Caco-2 (cell line): ENCODE measurements at regions of chr13 and their contacts with region 1.

Region 1: GRCh38 chr13:44050450-44051063 is 170.9 kb downstream of the LACC1 start:
- DNase-seq: peak in 1 of 2 experiments; percentile 43
- H3K4me3 ChIP-seq: no peak overlapping the region
- H3K4me3 Mint-ChIP-seq: no peak overlapping the region
- H3K27ac Mint-ChIP-seq: no peak overlapping the region
- H3K4me1 ChIP-seq: peaks cover 42% of the 10 kb centered on the region
- H3K4me1 Mint-ChIP-seq: peaks cover 36% of the 10 kb centered on the region
- H3K27me3 ChIP-seq: no peaks in the 10 kb centered on the region
- H3K27me3 Mint-ChIP-seq: no peaks in the 10 kb centered on the region
- CTCF ChIP-seq: peak; percentile 70 to 78

Region 2: DNA sequence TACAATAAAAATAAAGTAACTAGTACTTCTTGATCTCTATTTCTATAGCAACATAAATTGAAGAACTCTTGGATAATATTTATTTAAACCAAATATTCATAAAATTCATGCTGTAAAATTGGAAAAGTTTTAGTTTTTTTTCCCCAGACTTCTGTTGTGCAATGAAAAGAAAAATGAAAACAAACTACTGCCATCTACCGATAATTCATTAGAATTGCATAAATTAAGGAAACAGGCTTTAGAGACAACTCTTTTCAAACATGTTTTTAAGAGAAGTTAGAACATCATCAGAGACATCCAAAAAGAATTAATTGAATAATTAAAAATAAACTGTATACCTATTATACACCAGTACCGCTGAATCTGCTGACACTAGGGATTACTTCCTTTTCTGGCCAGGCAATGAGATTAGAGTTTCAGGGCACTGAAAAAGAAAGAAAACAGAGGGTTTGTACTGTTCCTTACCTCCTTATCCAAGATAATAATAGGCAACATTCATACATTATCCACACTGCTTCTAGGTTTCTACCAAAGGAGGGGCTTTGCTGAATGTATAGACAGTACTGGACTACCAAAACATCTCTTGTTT is 176.0 kb before region 1 on chr13:
- CTCF ChIA-PET with region 1: no interaction called
- POLR2A ChIA-PET with region 1: no interaction called
- intact Hi-C with region 1: no loop called
- DNase-seq: peak in 1 of 2 experiments; percentile 10
- H3K4me3 ChIP-seq: no peak overlapping the region
- H3K4me3 Mint-ChIP-seq: no peak overlapping the region
- H3K27ac Mint-ChIP-seq: no peak overlapping the region
- H3K4me1 ChIP-seq: 0 out of 2 replicates have a peak, but pooled peaks cover 5% of the 10 kb centered on the region
- H3K4me1 Mint-ChIP-seq: peaks cover 13% of the 10 kb centered on the region
- H3K27me3 ChIP-seq: no peaks in the 10 kb centered on the region
- H3K27me3 Mint-ChIP-seq: no peaks in the 10 kb centered on the region
- CTCF ChIP-seq: peak; percentile 36 to 58

Region 3: GRCh38 chr13:43905435-43906031 is 145.0 kb before region 1 on chr13:
- CTCF ChIA-PET with region 1: interaction called, 5 read pairs
- POLR2A ChIA-PET with region 1: no interaction called
- intact Hi-C with region 1: loop called (anchors 1 kb)
- DNase-seq: peak in 1 of 2 experiments; percentile 63
- H3K4me3 ChIP-seq: no peak overlapping the region
- H3K4me3 Mint-ChIP-seq: no peak overlapping the region
- H3K27ac Mint-ChIP-seq: no peak overlapping the region
- H3K4me1 ChIP-seq: no peaks in the 10 kb centered on the region
- H3K4me1 Mint-ChIP-seq: peaks cover 7% of the 10 kb centered on the region
- H3K27me3 ChIP-seq: no peaks in the 10 kb centered on the region
- H3K27me3 Mint-ChIP-seq: peaks cover 2% of the 10 kb centered on the region
- CTCF ChIP-seq: peak; percentile 63 to 86

Region 4: GRCh38 chr13:44040070-44040817 is 10.3 kb before region 1 on chr13:
- CTCF ChIA-PET with region 1: no interaction called
- POLR2A ChIA-PET with region 1: no interaction called
- intact Hi-C with region 1: no loop called
- DNase-seq: no peak
- H3K4me3 ChIP-seq: no peak overlapping the region
- H3K4me3 Mint-ChIP-seq: no peak overlapping the region
- H3K27ac Mint-ChIP-seq: no peak overlapping the region
- H3K4me1 ChIP-seq: no peaks in the 10 kb centered on the region
- H3K4me1 Mint-ChIP-seq: no peaks in the 10 kb centered on the region
- H3K27me3 ChIP-seq: no peaks in the 10 kb centered on the region
- H3K27me3 Mint-ChIP-seq: no peaks in the 10 kb centered on the region
- CTCF ChIP-seq: no peak

Region 5: GRCh38 chr13:44108331-44108858 is 57.8 kb after region 1 on chr13:
- CTCF ChIA-PET with region 1: no interaction called
- POLR2A ChIA-PET with region 1: no interaction called
- intact Hi-C with region 1: loop called (anchors 1 kb)
- DNase-seq: peak; percentile 89 to 91
- H3K4me3 ChIP-seq: no peak overlapping the region
- H3K4me3 Mint-ChIP-seq: peak overlapping the region; percentile 8
- H3K27ac Mint-ChIP-seq: peak overlapping the region; percentile 72
- H3K4me1 ChIP-seq: peaks cover 23% of the 10 kb centered on the region
- H3K4me1 Mint-ChIP-seq: peaks cover 30% of the 10 kb centered on the region
- H3K27me3 ChIP-seq: no peaks in the 10 kb centered on the region
- H3K27me3 Mint-ChIP-seq: no peaks in the 10 kb centered on the region
- CTCF ChIP-seq: no peak

Region 6: GRCh38 chr13:44230736-44231135 is 180.2 kb after region 1 on chr13:
- CTCF ChIA-PET with region 1: interaction called, 3 read pairs
- POLR2A ChIA-PET with region 1: interaction called, 5 read pairs
- intact Hi-C with region 1: loop called (anchors 1 kb)
- DNase-seq: no peak
- H3K4me3 ChIP-seq: no peak overlapping the region
- H3K4me3 Mint-ChIP-seq: no peak overlapping the region
- H3K27ac Mint-ChIP-seq: no peak overlapping the region
- H3K4me1 ChIP-seq: peaks cover 45% of the 10 kb centered on the region
- H3K4me1 Mint-ChIP-seq: peaks cover 7% of the 10 kb centered on the region
- H3K27me3 ChIP-seq: no peaks in the 10 kb centered on the region
- H3K27me3 Mint-ChIP-seq: no peaks in the 10 kb centered on the region
- CTCF ChIP-seq: no peak

Region 7: GRCh38 chr13:44364348-44365049 is 313.9 kb after region 1 on chr13:
- CTCF ChIA-PET with region 1: no interaction called
- POLR2A ChIA-PET with region 1: no interaction called
- intact Hi-C with region 1: loop called (anchors 5 kb)
- DNase-seq: peak; percentile 80 to 89
- H3K4me3 ChIP-seq: no peak overlapping the region
- H3K4me3 Mint-ChIP-seq: peak overlapping the region; percentile 5
- H3K27ac Mint-ChIP-seq: peak overlapping the region; percentile 81
- H3K4me1 ChIP-seq: peaks cover 83% of the 10 kb centered on the region
- H3K4me1 Mint-ChIP-seq: peaks cover 47% of the 10 kb centered on the region
- H3K27me3 ChIP-seq: no peaks in the 10 kb centered on the region
- H3K27me3 Mint-ChIP-seq: no peaks in the 10 kb centered on the region
- CTCF ChIP-seq: no peak